ENCODE measurements at regions of chr20 and their contacts with region 1.

Region 1: GRCh38 chr20:49713753-49714712 is at the start of gene B4GALT5:
- DNase-seq: peak; percentile 81
- ATAC-seq: peak; percentile 79
- H3K4me3 Mint-ChIP-seq: peak within 1 kb of the TSS; percentile 96
- H3K27ac Mint-ChIP-seq: peak within 1 kb of the TSS; percentile 94
- H3K4me1 Mint-ChIP-seq: peaks cover 48% of the 10 kb centered on the region
- H3K27me3 Mint-ChIP-seq: no peaks in the 10 kb centered on the region
- CTCF ChIP-seq: no peak
- total RNA-seq, gene B4GALT5: 70.6 and 72.9 TPM in 2 replicates

Region 2: GRCh38 chr20:49676581-49677291 is 37.3 kb before region 1 on chr20:
- CTCF ChIA-PET with region 1: no interaction called
- POLR2A ChIA-PET with region 1: interaction called, 3 read pairs
- intact Hi-C with region 1: loop called (anchors 5 kb)
- DNase-seq: no peak
- ATAC-seq: peak; percentile 78
- H3K4me3 Mint-ChIP-seq: peak overlapping the region; percentile 47
- H3K27ac Mint-ChIP-seq: peak overlapping the region; percentile 87
- H3K4me1 Mint-ChIP-seq: peaks cover 72% of the 10 kb centered on the region
- H3K27me3 Mint-ChIP-seq: no peaks in the 10 kb centered on the region
- CTCF ChIP-seq: no peak

Region 3: GRCh38 chr20:49747707-49748524 is 33.9 kb after region 1 on chr20:
- CTCF ChIA-PET with region 1: no interaction called
- POLR2A ChIA-PET with region 1: interaction called, 4 read pairs
- intact Hi-C with region 1: loop called (anchors 5 kb)
- DNase-seq: no peak
- ATAC-seq: no peak
- H3K4me3 Mint-ChIP-seq: no peak overlapping the region
- H3K27ac Mint-ChIP-seq: no peak overlapping the region
- H3K4me1 Mint-ChIP-seq: peaks cover 16% of the 10 kb centered on the region
- H3K27me3 Mint-ChIP-seq: no peaks in the 10 kb centered on the region
- CTCF ChIP-seq: no peak

Region 4: DNA sequence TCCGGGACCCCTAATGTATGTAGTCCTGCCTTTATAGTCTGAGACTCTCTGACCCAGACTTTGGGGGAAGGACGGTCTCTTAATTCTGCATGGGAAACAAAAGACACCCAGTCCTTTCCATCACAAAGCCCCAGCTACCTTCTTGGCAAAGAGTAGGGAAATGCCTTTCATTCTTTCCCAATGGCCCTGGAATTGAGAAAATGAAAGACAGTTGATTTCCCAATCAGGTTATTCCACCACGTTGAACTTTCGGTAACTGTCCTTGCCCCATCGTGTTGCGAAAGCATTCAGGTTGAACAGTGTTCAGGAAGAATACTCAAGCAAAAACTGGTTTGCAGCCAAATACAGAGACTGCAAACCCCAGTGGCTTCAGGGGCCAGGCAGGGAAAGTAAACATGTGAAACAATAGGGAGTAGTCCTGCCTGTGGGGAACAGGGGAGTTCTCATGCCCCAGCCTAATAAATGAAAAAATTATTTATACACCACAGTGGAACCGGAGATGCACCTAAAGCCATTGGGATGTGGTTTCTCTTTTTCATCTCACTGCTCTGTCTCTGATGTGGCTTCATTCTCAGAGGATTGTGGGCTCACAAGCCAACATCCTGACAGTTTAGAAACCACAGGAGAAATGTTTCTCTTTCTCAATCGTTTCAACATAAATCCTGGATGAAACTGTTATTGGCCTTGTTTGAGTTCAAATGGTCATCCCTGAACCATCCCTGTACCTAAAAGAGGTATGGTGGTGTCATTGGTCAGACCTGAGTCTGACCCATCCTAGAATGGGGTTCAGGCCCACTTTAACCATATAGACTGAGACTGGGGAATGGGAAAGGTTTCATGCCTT is 54.4 kb after region 1 on chr20:
- CTCF ChIA-PET with region 1: no interaction called
- POLR2A ChIA-PET with region 1: no interaction called
- intact Hi-C with region 1: no loop called
- DNase-seq: no peak
- ATAC-seq: no peak
- H3K4me3 Mint-ChIP-seq: no peak overlapping the region
- H3K27ac Mint-ChIP-seq: no peak overlapping the region
- H3K4me1 Mint-ChIP-seq: peaks cover 9% of the 10 kb centered on the region
- H3K27me3 Mint-ChIP-seq: no peaks in the 10 kb centered on the region
- CTCF ChIP-seq: no peak

Region 5: DNA sequence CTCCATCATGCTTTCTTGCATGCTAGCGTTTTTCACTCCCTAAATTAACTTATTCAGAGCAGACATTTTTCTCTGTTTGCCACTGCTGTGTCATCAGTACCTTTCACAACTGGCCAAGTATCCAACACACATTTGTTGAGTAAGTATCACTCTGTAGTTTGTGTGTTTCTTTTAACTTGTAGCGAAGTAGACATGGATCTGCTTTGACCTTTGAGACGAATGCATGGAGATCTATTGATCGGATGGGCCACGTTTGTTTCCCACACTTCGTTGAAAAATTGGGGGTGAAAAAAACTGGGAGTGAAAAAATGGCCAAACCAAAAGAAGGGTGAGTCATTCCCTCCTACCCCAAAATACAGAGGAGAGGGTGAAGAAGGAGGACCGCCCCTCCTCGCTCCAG is 85.7 kb after region 1 on chr20:
- CTCF ChIA-PET with region 1: no interaction called
- POLR2A ChIA-PET with region 1: interaction called, 55 read pairs
- intact Hi-C with region 1: loop called (anchors 1 kb)
- DNase-seq: no peak
- ATAC-seq: no peak
- H3K4me3 Mint-ChIP-seq: no peak overlapping the region
- H3K27ac Mint-ChIP-seq: no peak overlapping the region
- H3K4me1 Mint-ChIP-seq: peaks cover 68% of the 10 kb centered on the region
- H3K27me3 Mint-ChIP-seq: no peaks in the 10 kb centered on the region
- CTCF ChIP-seq: no peak

Region 6: DNA sequence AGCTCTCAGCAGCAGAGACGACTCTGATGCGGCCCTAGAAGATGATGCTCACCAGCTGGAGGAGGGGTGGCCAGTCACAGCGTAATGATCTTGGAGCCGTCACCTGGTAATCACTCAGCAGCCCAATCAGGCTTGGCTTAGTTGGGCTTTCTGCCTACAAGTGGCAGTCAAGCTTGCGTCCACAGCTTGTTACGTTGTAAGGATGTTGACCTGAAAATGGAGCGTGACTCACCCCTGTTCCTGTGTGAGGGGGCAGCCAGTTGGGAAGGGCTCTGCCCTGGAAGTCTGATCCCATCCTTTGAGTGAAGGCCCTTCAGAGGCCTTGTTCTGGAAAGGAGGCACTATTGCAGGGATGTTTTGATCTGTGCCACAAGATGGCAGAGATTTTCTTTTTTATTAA is 151.5 kb after region 1 on chr20:
- CTCF ChIA-PET with region 1: no interaction called
- POLR2A ChIA-PET with region 1: no interaction called
- intact Hi-C with region 1: no loop called
- DNase-seq: no peak
- ATAC-seq: no peak
- H3K4me3 Mint-ChIP-seq: no peak overlapping the region
- H3K27ac Mint-ChIP-seq: no peak overlapping the region
- H3K4me1 Mint-ChIP-seq: peaks cover 19% of the 10 kb centered on the region
- H3K27me3 Mint-ChIP-seq: no peaks in the 10 kb centered on the region
- CTCF ChIP-seq: no peak

Region 7: GRCh38 chr20:49915378-49916145 is 201.5 kb after region 1 on chr20 and contains the start of gene SPATA2:
- CTCF ChIA-PET with region 1: no interaction called
- POLR2A ChIA-PET with region 1: no interaction called
- intact Hi-C with region 1: loop called (anchors 5 kb)
- DNase-seq: peak; percentile 95
- ATAC-seq: peak; percentile 80
- H3K4me3 Mint-ChIP-seq: peak within 1 kb of the TSS; percentile 97
- H3K27ac Mint-ChIP-seq: peak within 1 kb of the TSS; percentile 99
- H3K4me1 Mint-ChIP-seq: peaks cover 34% of the 10 kb centered on the region
- H3K27me3 Mint-ChIP-seq: no peaks in the 10 kb centered on the region
- CTCF ChIP-seq: no peak
- total RNA-seq, gene SPATA2: 9.1 and 9.4 TPM in 2 replicates

Measured in activated B cell treated with CpG ODN at 0.5 μM for 24 hours (primary cell).